ENCODE measurements at regions of chr17 and their contacts with region 1.

Region 1: DNA sequence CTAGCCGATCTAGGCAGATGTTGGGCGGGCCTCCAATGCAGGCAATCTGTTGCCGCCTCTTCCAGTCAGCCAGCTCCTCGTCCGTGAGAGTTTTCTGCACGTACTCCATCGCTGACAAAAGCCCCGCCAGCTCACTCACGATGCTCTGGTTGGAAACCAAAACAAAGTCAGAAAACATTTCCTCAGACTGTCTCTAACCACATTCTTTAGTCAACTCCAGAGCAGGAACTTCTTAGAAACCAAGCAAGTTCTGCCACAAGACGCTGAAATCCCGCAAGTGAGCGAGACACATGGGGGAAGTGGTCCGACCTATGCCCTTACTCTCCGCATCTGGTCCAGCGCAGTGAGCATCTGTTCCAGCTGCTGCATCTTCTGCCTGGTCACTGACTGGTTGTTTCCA is 49.1 kb downstream of the STAT5A start:
- DNase-seq: peak; percentile 94
- ATAC-seq: peak; percentile 78
- H3K4me3 ChIP-seq: no peak overlapping the region
- H3K27ac ChIP-seq: peak overlapping the region; percentile 73
- H3K4me1 ChIP-seq: peaks cover 64% of the 10 kb centered on the region
- H3K27me3 ChIP-seq: no peaks in the 10 kb centered on the region
- CTCF ChIP-seq: no peak
- EP300 ChIP-seq: peak; percentile 70 to 85
- POLR2A ChIP-seq: 0 out of 2 replicates have a peak, but pooled peaks have one; percentile 17
- RAD21 ChIP-seq: no peak

Region 2: GRCh38 chr17:42378597-42379594 is 41.5 kb after region 1 on chr17:
- CTCF ChIA-PET with region 1: no interaction called
- POLR2A ChIA-PET with region 1: interaction called, 21 read pairs
- RAD21 ChIA-PET with region 1: interaction called, 5 read pairs
- SMC1A ChIA-PET with region 1: interaction called, 12 read pairs
- in situ Hi-C with region 1: no loop called
- intact Hi-C with region 1: no loop called
- DNase-seq: peak; percentile 41
- ATAC-seq: peak; percentile 63
- H3K4me3 ChIP-seq: peak overlapping the region; percentile 80
- H3K27ac ChIP-seq: peak overlapping the region; percentile 90
- H3K4me1 ChIP-seq: peaks cover 31% of the 10 kb centered on the region
- H3K27me3 ChIP-seq: no peaks in the 10 kb centered on the region
- CTCF ChIP-seq: no peak
- EP300 ChIP-seq: no peak; a peak in 1 of 4 replicates
- POLR2A ChIP-seq: no peak
- RAD21 ChIP-seq: no peak

Region 3: DNA sequence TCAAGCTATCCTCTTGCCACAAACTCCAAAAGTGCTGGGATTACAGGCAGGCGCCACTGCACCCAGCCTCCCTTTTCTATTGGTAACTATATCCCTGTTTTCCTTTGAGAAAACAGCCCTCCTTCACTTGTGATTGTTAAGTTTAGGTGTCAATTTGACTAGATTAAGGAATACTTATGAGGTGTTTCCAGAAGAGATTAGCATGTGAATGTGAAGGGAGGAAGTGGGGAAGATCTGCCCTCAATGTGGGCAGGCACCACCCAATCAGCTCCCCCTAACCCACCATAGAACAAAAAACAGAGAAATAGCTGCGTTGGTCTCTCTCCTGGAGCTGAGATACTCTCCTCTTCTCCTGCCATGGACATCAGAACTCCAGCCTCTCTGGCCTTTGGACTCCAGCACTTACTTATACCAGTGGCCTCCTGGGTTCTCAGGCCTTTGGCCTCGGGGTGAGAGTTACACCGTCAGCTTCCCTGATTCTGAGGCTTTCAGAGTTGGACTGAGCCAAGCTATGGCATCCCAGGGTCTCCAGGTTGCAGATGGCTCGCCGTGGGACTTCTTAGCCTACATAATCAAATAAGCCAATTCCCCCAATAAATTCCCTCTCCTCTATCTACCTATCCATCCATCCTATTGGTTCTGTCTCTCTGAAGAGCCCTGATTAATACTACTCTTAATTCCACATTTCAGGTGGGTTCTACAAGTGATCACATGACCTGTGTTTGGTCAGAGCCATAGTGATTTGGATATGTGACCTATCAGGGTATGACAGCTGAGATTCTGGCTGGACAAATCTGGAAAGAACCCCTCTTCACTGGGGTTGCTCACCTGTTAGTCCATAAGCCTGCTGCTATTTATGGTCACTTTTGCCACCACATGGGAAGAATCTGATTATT is 62.8 kb after region 1 on chr17:
- CTCF ChIA-PET with region 1: interaction called, 48 read pairs
- POLR2A ChIA-PET with region 1: interaction called, 5 read pairs
- RAD21 ChIA-PET with region 1: interaction called, 14 read pairs
- SMC1A ChIA-PET with region 1: interaction called, 14 read pairs
- in situ Hi-C with region 1: no loop called
- intact Hi-C with region 1: no loop called
- DNase-seq: no peak
- ATAC-seq: no peak
- H3K4me3 ChIP-seq: no peak overlapping the region
- H3K27ac ChIP-seq: no peak overlapping the region
- H3K4me1 ChIP-seq: no peaks in the 10 kb centered on the region
- H3K27me3 ChIP-seq: no peaks in the 10 kb centered on the region
- CTCF ChIP-seq: no peak
- EP300 ChIP-seq: no peak
- POLR2A ChIP-seq: no peak
- RAD21 ChIP-seq: no peak

Measured in GM12878 (cell line).